B cell (primary cell): ENCODE measurements at regions of chr12 and their contacts with region 1.

Region 1: DNA sequence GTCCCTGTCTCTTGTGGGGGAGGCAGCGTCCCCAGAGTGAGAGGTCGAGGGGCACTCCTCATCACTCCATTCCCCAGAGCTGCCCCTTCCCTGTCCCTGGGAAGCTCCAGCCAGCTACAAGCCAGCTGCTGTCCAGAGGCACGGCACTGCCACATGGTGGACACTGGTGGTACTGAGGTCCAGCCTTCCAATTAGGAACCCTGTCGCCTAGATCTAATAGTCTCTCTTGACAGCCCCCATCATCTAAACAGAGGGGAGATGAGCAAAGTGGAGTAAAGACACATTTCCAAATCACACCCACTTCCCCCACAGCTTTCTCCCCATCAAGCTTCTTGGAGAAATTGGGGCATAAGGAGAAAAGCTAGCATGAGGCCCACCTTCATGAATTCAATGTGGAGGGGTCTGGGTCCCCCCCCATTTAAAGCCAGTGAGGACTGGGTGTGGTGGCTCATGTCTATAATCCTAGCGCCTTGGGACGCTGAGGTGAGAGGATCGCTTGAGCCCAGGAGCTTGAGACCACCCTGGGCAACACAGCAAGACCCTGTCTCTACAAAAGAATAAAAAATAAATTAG is 2.1 kb upstream of the INHBE start:
- DNase-seq: peak; percentile 61
- ATAC-seq: peak; percentile 55
- H3K4me3 ChIP-seq: no peak overlapping the region
- H3K4me3 Mint-ChIP-seq: no peak overlapping the region
- H3K27ac ChIP-seq: no peak overlapping the region
- H3K27ac Mint-ChIP-seq: peak overlapping the region; percentile 11
- H3K4me1 ChIP-seq: peaks cover 7 to 10% of the 10 kb centered on the region in 2 donors
- H3K4me1 Mint-ChIP-seq: peaks cover 15% of the 10 kb centered on the region
- H3K27me3 ChIP-seq: no peaks in the 10 kb centered on the region
- H3K27me3 Mint-ChIP-seq: peaks cover 4% of the 10 kb centered on the region
- CTCF ChIP-seq: peak; percentile 72

Region 2: GRCh38 chr12:57213058-57213715 is 239.8 kb before region 1 on chr12:
- CTCF ChIA-PET with region 1: interaction called, 27 read pairs
- POLR2A ChIA-PET with region 1: no interaction called
- intact Hi-C with region 1: no loop called
- DNase-seq: peak; percentile 89
- ATAC-seq: peak; percentile 42
- H3K4me3 ChIP-seq: peak overlapping the region in 1 of 5 experiments; percentile 20
- H3K4me3 Mint-ChIP-seq: peak overlapping the region; percentile 54
- H3K27ac ChIP-seq: no peak overlapping the region
- H3K27ac Mint-ChIP-seq: peak overlapping the region; percentile 56
- H3K4me1 ChIP-seq: peaks cover 43 to 49% of the 10 kb centered on the region in 2 donors
- H3K4me1 Mint-ChIP-seq: peaks cover 43% of the 10 kb centered on the region
- H3K27me3 ChIP-seq: peaks cover 0 to 51% (median 17%) of the 10 kb centered on the region in 4 experiments
- H3K27me3 Mint-ChIP-seq: peaks cover 24% of the 10 kb centered on the region
- CTCF ChIP-seq: peak; percentile 93

Region 3: GRCh38 chr12:57261428-57261865 is 191.6 kb before region 1 on chr12:
- CTCF ChIA-PET with region 1: interaction called, 126 read pairs
- POLR2A ChIA-PET with region 1: no interaction called
- intact Hi-C with region 1: loop called (anchors 1 kb)
- DNase-seq: no peak
- ATAC-seq: no peak
- H3K4me3 ChIP-seq: no peak overlapping the region
- H3K4me3 Mint-ChIP-seq: no peak overlapping the region
- H3K27ac ChIP-seq: no peak overlapping the region
- H3K27ac Mint-ChIP-seq: no peak overlapping the region
- H3K4me1 ChIP-seq: peaks cover 0 to 6% of the 10 kb centered on the region in 2 donors
- H3K4me1 Mint-ChIP-seq: peaks cover 9% of the 10 kb centered on the region
- H3K27me3 ChIP-seq: no peaks in the 10 kb centered on the region
- H3K27me3 Mint-ChIP-seq: no peaks in the 10 kb centered on the region
- CTCF ChIP-seq: no peak

Region 4: DNA sequence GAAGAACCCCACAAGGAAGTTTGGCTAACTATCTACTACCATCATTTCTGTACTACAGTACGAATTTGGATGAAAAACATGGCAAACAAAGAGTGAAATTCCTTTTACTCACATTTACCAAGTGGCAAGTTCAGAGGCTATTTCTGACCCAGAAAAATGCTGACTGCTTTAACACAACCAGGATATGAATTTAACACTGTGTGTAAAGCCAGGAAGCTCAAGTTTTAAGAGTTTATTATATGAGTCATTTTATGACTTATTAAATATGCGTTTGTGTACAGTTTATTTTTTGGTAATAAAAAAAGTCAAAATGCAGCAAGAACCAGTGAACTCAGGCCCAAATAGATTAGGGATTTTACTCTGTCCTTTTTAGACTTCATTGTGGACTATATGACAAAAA is 143.6 kb before region 1 on chr12:
- CTCF ChIA-PET with region 1: interaction called, 89 read pairs
- POLR2A ChIA-PET with region 1: no interaction called
- intact Hi-C with region 1: loop called (anchors 2 kb)
- DNase-seq: no peak
- ATAC-seq: no peak
- H3K4me3 ChIP-seq: no peak overlapping the region
- H3K4me3 Mint-ChIP-seq: no peak overlapping the region
- H3K27ac ChIP-seq: no peak overlapping the region
- H3K27ac Mint-ChIP-seq: no peak overlapping the region
- H3K4me1 ChIP-seq: no peaks in the 10 kb centered on the region
- H3K4me1 Mint-ChIP-seq: no peaks in the 10 kb centered on the region
- H3K27me3 ChIP-seq: no peaks in the 10 kb centered on the region
- H3K27me3 Mint-ChIP-seq: no peaks in the 10 kb centered on the region
- CTCF ChIP-seq: no peak

Region 5: DNA sequence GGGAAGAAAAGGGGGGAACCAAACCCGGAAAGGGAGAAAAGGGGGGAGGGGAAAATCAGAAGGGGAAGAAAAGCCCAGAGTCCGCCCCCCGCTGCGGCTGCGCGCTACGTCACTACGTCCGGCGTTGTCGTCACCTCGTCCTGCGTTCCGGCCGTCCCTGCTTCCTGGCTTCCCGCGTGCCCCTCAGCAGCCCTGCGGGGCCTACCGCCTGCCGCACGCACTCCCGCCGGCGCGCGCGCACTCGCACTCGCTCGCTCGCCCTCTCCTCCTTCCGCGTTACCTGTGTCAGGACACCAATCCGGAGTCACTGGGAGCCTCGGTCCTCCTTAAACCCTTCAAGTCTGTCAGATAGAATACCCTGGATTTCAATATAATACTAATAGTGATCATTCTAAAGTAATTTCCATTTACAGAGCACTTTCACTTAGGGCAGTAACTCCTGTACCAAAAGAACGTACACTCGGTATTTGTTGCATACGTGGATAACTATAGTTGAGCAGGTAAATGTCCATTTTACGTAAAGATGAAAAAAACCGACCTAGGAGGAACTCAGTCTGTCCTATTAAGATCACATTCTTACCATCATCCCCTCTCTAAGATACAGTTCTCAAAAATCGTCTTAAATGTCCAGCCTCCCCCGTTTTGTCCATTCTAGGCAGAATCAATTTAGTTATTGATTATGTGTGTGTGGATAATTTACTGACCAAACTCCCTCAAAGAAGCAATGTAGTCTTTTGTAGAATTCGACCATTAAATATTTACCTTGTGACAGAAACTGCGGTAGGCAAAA is 21.9 kb before region 1 on chr12 and contains the start of gene R3HDM2:
- CTCF ChIA-PET with region 1: interaction called, 28 read pairs
- POLR2A ChIA-PET with region 1: interaction called, 3 read pairs
- intact Hi-C with region 1: no loop called
- DNase-seq: peak; percentile 97
- ATAC-seq: peak; percentile 91
- H3K4me3 ChIP-seq: peak within 1 kb of the TSS; percentile 60 to 94 (median 64)
- H3K4me3 Mint-ChIP-seq: peak within 1 kb of the TSS; percentile 99
- H3K27ac ChIP-seq: peak within 1 kb of the TSS; percentile 96
- H3K27ac Mint-ChIP-seq: peak within 1 kb of the TSS; percentile 99
- H3K4me1 ChIP-seq: peaks cover 13 to 19% of the 10 kb centered on the region in 2 donors
- H3K4me1 Mint-ChIP-seq: peaks cover 41% of the 10 kb centered on the region
- H3K27me3 ChIP-seq: no peaks in the 10 kb centered on the region
- H3K27me3 Mint-ChIP-seq: no peaks in the 10 kb centered on the region
- CTCF ChIP-seq: no peak
- total RNA-seq, gene R3HDM2: 129 TPM in 2 replicates